ENCODE measurements at regions of chr12 and their contacts with region 1.

Region 1: DNA sequence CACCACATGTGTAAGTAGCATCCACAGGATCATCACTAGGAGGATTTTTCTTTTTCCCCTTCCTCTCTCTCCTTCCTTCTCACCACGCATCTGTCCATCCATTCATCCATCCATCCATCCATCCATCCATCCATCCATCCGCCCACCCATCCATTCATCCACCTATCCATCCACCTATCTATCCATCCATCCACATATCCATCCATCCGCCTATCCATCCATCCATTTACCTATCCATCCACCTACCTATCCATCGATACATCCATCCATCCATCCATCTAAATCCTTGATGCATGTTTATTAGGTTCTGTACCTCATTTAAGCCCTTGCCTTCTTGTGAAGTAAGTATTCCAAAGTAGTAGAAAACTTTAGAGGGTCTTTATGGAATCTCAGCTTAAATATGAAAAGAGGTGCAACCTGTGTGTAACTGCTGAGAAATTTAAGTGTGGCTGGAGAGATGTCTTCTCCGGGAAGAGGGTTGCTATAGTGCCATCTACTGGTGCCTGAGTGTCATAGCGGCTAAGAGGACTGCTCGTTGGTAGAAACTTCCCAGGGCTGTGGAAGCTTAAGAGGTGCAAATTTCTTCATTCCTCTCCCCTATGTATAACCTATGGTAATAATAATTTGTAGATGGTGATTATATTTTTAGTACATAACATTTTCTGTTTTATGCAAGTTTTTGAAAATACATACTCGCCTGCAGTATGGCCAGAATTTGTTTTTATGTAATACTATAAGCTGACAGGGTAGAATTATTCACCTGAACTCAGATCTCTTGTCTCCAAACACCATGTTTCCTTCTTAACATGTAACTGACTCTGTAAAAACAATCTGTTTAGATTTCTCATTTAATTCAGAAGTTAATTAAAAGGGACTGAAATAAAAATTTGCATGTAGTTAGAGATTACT is 46.0 kb downstream of the MYO1H start:
- DNase-seq: peak; percentile 45
- ATAC-seq: peak; percentile 85
- H3K4me3 Mint-ChIP-seq: no peak overlapping the region
- H3K27ac Mint-ChIP-seq: no peak overlapping the region
- H3K4me1 Mint-ChIP-seq: no peaks in the 10 kb centered on the region
- H3K27me3 Mint-ChIP-seq: peaks cover 2% of the 10 kb centered on the region; the same call in 1 of the 2 replicates
- CTCF ChIP-seq: peak; percentile 64

Region 2: GRCh38 chr12:109182041-109182839 is 211.5 kb before region 1 on chr12:
- CTCF ChIA-PET with region 1: no interaction called
- POLR2A ChIA-PET with region 1: no interaction called
- DNase-seq: no peak
- ATAC-seq: no peak
- H3K4me3 Mint-ChIP-seq: no peak overlapping the region
- H3K27ac Mint-ChIP-seq: peak overlapping the region; percentile 18; the same call in 1 of the 2 replicates
- H3K4me1 Mint-ChIP-seq: no peaks in the 10 kb centered on the region
- H3K27me3 Mint-ChIP-seq: no peaks in the 10 kb centered on the region
- CTCF ChIP-seq: no peak

Region 3: GRCh38 chr12:109264095-109264942 is 129.4 kb before region 1 on chr12:
- CTCF ChIA-PET with region 1: interaction called, 30 read pairs
- POLR2A ChIA-PET with region 1: no interaction called
- DNase-seq: peak; percentile 95
- ATAC-seq: peak; percentile 90
- H3K4me3 Mint-ChIP-seq: no peak overlapping the region
- H3K27ac Mint-ChIP-seq: no peak overlapping the region
- H3K4me1 Mint-ChIP-seq: peaks cover 10% of the 10 kb centered on the region
- H3K27me3 Mint-ChIP-seq: no peaks in the 10 kb centered on the region
- CTCF ChIP-seq: peak; percentile 58; the same call in 1 of the 2 replicates

Region 4: DNA sequence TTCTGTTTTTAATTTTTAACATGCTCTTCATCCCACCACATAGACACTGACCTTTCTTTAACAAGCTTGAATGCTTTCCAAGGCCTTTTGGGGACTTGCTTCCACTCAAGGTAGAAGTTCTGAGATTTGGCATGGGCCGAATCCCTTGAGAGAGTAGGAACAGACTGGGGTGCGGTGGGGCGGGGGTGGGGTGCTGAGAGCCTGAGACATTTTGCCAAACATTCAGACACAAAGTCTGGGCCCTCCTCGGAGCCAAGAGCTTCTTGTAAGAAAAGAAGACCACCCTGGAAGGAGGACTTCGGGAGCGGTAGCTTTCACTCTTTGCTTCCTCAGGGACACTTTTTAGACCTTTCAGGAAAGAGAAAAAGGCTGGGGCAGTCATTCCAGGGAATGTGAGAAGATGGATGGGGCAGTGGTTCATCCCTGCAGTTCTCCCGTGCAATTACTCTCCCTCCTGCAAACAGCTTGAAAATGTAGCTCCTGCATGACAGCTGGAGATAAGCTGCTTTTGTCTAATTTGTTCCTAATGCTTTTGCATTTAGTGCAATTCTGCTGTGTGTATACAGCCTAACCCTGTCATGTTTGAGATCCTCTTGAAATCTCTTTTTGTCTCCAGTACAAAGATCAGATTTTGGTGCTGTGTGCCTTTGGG is 62.3 kb before region 1 on chr12:
- CTCF ChIA-PET with region 1: interaction called, 12 read pairs
- POLR2A ChIA-PET with region 1: no interaction called
- DNase-seq: no peak
- ATAC-seq: no peak
- H3K4me3 Mint-ChIP-seq: no peak overlapping the region
- H3K27ac Mint-ChIP-seq: no peak overlapping the region
- H3K4me1 Mint-ChIP-seq: peaks cover 6% of the 10 kb centered on the region; the same call in 1 of the 2 replicates
- H3K27me3 Mint-ChIP-seq: no peaks in the 10 kb centered on the region; the same call in 1 of the 2 replicates
- CTCF ChIP-seq: no peak

Region 5: DNA sequence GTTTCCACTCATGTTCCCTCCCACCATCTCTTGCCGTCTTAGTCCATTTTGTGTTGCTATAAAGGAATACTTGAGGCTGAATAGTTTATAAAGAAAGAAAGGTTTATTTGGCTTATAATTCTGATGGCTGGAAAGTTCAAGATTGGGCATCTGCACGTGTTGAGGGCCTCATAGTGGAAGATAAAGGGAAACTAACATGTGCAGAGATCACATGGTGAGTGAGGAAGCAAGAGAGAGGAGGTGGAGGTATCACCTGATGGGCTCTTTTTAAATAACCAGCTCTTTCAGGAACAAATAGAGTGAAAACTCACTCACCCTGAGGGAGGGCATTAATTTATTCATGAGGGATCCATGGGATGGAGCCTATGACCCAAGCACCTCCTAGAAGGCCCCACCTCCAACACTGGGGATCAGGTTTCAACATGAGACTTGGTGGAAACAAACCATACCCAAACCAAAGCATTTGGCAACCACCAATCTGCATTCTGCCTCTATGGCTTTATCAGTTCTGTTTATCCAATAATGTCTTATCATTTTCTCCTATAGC is 16.5 kb before region 1 on chr12:
- CTCF ChIA-PET with region 1: interaction called, 13 read pairs
- POLR2A ChIA-PET with region 1: no interaction called
- DNase-seq: peak; percentile 39
- ATAC-seq: peak; percentile 100
- H3K4me3 Mint-ChIP-seq: no peak overlapping the region
- H3K27ac Mint-ChIP-seq: peak overlapping the region; percentile 24; the same call in 1 of the 2 replicates
- H3K4me1 Mint-ChIP-seq: peaks cover 4% of the 10 kb centered on the region
- H3K27me3 Mint-ChIP-seq: peaks cover 5% of the 10 kb centered on the region; the same call in 1 of the 2 replicates
- CTCF ChIP-seq: no peak

Region 6: GRCh38 chr12:109542014-109542413 is 148.3 kb after region 1 on chr12:
- CTCF ChIA-PET with region 1: no interaction called
- POLR2A ChIA-PET with region 1: no interaction called
- DNase-seq: no peak
- ATAC-seq: no peak
- H3K4me3 Mint-ChIP-seq: no peak overlapping the region
- H3K27ac Mint-ChIP-seq: no peak overlapping the region; the same call in 1 of the 2 replicates
- H3K4me1 Mint-ChIP-seq: no peaks in the 10 kb centered on the region
- H3K27me3 Mint-ChIP-seq: no peaks in the 10 kb centered on the region; the same call in 1 of the 2 replicates
- CTCF ChIP-seq: no peak

Region 7: DNA sequence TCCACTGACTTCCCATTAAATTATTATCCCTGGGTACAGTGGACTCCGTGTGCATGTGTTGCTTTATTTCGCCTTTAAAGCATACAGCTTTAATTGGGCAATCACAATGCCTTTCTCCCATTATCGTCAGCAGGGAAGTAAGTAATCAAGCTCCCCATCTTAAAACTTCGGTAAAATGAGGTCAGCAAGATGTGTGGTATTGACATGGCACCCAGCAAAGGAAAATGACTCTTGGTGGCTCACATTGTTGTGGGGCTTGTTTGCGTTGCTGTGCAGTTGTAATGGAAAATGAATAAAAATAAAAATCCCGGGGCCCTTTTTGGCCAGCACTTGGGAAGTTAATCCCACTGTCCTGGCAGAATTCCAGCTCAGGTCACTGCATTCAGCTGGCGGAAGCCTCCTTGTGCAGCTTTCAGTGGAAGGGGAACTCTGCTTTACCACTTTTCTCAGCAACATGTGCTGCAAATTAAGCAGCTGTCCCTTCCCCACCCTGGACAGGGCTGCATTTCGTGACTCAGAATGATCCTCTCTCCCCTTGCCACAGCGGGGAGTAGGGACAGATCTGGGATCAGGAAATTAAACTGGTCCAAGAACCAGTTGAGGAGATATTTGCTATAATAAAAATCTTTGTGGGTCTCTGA is 873.4 kb after region 1 on chr12:
- CTCF ChIA-PET with region 1: no interaction called
- POLR2A ChIA-PET with region 1: no interaction called
- DNase-seq: no peak
- ATAC-seq: peak; percentile 21
- H3K4me3 Mint-ChIP-seq: no peak overlapping the region
- H3K27ac Mint-ChIP-seq: no peak overlapping the region
- H3K4me1 Mint-ChIP-seq: peaks cover 44% of the 10 kb centered on the region
- H3K27me3 Mint-ChIP-seq: no peaks in the 10 kb centered on the region
- CTCF ChIP-seq: no peak